Dorsolateral prefrontal cortex (tissue), 120 donors: ENCODE measurements at regions of chr1 and their contacts with region 1.

Region 1: GRCh38 chr1:29332204-29332603 is 95.9 kb downstream of the PTPRU start:
- DNase-seq: peak in 1 of 10 donors; percentile 55
- H3K4me3 ChIP-seq: no peak overlapping the region
- H3K27ac ChIP-seq: peak overlapping the region in 30 of 59 donors; percentile 0 to 79 (median 52)
- H3K27me3 ChIP-seq: peaks cover 0 to 3% (median 0%) of the 10 kb centered on the region in 45 donors
- CTCF ChIP-seq: peak in 16 of 56 donors; percentile 7 to 42 (median 20)

Region 2: GRCh38 chr1:29259802-29260441 is 72.3 kb before region 1 on chr1:
- intact Hi-C with region 1: loop called in 1 of 2 experiments (anchors 10 kb)
- DNase-seq: peak in 5 of 10 donors; percentile 26 to 68 (median 42)
- H3K4me3 ChIP-seq: peak overlapping the region; percentile 40 to 76 (median 61)
- H3K27ac ChIP-seq: peak overlapping the region in 5 of 59 donors; percentile 3 to 53 (median 35)
- H3K27me3 ChIP-seq: peaks cover 0 to 7% (median 0%) of the 10 kb centered on the region in 45 donors
- CTCF ChIP-seq: no peak

Region 3: DNA sequence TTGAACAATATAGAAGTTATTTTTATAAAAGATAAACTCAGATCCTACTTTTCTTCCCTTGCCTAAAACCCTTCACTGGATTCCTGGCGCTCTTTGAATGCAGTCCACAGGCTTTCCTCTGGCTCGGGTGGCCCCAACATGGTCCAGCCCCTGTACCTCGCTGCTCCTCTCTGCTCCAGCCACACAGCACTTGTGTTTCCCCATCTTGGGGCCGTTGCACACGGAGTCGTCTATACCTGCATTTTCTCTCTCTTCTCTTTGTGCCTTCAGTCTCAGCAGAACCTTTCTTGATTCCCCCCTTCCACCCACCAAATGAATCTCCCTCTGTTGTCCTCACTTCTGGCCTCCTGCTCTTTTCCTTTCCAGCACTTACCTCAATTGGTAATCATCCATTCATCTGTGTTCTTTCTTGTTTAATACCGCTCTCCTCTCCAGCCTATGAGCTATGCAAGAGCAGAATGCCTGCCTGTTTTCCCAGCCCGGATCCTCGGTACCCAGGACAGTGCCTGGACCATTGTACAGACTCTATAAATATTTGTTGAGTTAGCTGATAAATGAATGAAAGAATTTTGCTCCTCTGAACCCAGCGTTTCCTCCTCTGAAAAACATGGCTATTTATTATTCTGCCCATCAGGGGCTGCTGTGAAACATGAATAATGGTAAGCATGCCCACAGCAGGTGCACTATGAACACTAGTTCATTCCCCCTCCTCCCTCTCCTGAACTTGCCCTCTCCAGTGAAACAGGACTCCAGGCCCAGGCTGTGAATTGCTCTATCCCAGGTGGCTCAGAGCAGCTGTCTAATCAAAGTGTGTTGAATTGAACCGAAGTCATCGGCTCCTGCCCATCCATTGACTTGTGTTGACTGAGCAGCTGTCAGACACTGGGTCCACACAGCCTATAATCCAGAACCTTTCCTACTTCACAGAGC is 171.0 kb after region 1 on chr1:
- intact Hi-C with region 1: no loop called
- DNase-seq: peak in 1 of 10 donors; percentile 11
- H3K4me3 ChIP-seq: no peak overlapping the region
- H3K27ac ChIP-seq: no peak overlapping the region
- H3K27me3 ChIP-seq: peaks cover 0 to 14% (median 0%) of the 10 kb centered on the region in 45 donors
- CTCF ChIP-seq: no peak